Heart left ventricle (tissue), 16 donors: ENCODE measurements at regions of chr19 and their contacts with region 1.

Region 1: DNA sequence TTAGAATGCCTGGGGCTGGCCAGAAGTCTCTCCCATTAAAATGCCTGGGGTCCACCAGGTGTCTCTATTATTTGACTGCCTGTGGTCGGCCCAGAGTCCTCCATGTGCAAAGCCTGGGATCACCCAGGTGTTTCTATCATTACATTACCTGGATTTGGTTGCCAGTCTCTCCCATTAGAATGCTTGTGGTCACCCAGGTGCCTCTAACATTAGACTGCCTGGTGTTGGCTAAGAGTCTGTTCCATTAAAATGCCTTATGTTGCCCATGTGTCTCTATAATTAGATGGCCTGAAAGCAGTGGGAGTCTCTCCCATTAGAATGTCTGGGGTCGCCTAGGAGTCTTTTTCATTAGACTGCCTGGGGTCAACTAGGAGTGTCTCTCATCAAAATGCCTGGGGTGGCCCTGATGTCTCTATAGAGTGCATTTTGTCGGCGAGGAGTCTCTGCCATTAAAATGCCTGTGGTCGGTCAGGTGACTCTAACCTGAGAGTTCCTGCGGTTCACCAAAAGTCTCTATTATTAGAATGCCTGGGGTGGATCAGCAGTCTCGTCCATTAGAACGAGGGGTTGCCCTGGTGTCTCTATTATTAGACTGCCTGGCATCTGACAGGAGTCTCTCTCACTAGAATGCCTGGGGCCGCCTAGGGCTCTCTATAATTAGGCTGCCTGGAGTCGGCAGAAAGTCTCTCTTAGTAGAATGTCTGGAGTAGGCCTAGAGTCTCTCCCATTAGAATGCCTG is 1540.5 kb downstream of the UQCRFS1 start:
- DNase-seq: peak in 4 of 5 donors; percentile 52 to 72 (median 58)
- ATAC-seq: peak; percentile 81 to 92 (median 90)
- H3K4me3 ChIP-seq: no peak overlapping the region
- H3K27ac ChIP-seq: peak overlapping the region in 5 of 12 donors; percentile 55 to 74 (median 60)
- H3K4me1 ChIP-seq: peaks cover 0 to 43% (median 11%) of the 10 kb centered on the region in 12 donors
- H3K27me3 ChIP-seq: no peaks in the 10 kb centered on the region
- CTCF ChIP-seq: no peak
- POLR2A ChIP-seq: no peak

Region 2: GRCh38 chr19:27694361-27695055 is 22.0 kb after region 1 on chr19:
- intact Hi-C with region 1: no loop called
- DNase-seq: no peak
- ATAC-seq: no peak
- H3K4me3 ChIP-seq: no peak overlapping the region
- H3K27ac ChIP-seq: no peak overlapping the region
- H3K4me1 ChIP-seq: no peaks in the 10 kb centered on the region
- H3K27me3 ChIP-seq: no peaks in the 10 kb centered on the region
- CTCF ChIP-seq: no peak
- POLR2A ChIP-seq: no peak

Region 3: GRCh38 chr19:27746691-27747380 is 74.4 kb after region 1 on chr19:
- intact Hi-C with region 1: loop called in 2 of 10 experiments (anchors 5 to 10 kb)
- DNase-seq: peak; percentile 18 to 72 (median 44)
- ATAC-seq: peak; percentile 58 to 88 (median 79)
- H3K4me3 ChIP-seq: peak overlapping the region in 8 of 12 donors; percentile 20 to 49 (median 36)
- H3K27ac ChIP-seq: no peak overlapping the region
- H3K4me1 ChIP-seq: peaks cover 0 to 30% (median 11%) of the 10 kb centered on the region in 12 donors
- H3K27me3 ChIP-seq: no peaks in the 10 kb centered on the region
- CTCF ChIP-seq: peak in 10 of 12 donors; percentile 30 to 50 (median 38)
- POLR2A ChIP-seq: no peak

Region 4: GRCh38 chr19:27793644-27794493 is 121.4 kb after region 1 on chr19:
- intact Hi-C with region 1: loop called in 3 of 10 experiments (anchors 5 to 10 kb)
- DNase-seq: peak; percentile 92 to 97 (median 95)
- ATAC-seq: peak; percentile 98 to 99 (median 98)
- H3K4me3 ChIP-seq: peak overlapping the region; percentile 58 to 95 (median 82)
- H3K27ac ChIP-seq: peak overlapping the region; percentile 82 to 94 (median 90)
- H3K4me1 ChIP-seq: peaks cover 0 to 33% (median 17%) of the 10 kb centered on the region in 12 donors
- H3K27me3 ChIP-seq: no peaks in the 10 kb centered on the region
- CTCF ChIP-seq: peak in 1 of 12 donors; percentile 11
- POLR2A ChIP-seq: peak in 1 of 2 donors; percentile 45

Region 5: DNA sequence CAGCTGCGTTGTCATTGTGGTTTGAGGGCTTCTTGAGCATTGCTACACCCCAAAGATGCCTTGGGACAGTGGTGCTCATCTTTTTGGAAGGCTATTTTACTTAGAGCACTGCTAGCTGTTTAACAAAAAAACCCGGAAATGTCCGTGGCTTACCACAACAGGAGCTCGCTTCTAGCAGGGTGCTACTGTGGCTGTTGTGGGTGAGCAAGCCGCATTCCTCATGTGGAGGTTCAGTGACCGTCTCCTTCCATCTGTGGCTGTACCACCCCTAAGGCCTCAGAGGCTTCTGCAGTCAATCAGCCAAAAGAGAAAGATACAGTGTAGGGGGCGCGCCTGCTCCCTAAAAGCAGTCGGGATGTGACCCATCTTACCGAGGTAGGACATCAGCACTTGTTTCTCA is 536.3 kb after region 1 on chr19:
- intact Hi-C with region 1: no loop called
- DNase-seq: no peak
- ATAC-seq: no peak
- H3K4me3 ChIP-seq: no peak overlapping the region
- H3K27ac ChIP-seq: no peak overlapping the region
- H3K4me1 ChIP-seq: no peaks in the 10 kb centered on the region
- H3K27me3 ChIP-seq: peaks cover 0 to 4% (median 0%) of the 10 kb centered on the region in 9 donors
- CTCF ChIP-seq: no peak
- POLR2A ChIP-seq: no peak